Tibial artery (tissue), 4 donors: ENCODE measurements at regions of chr1 and their contacts with region 1.

Region 1: GRCh38 chr1:84506002-84506728 is at the starts of genes GNG5 and SPATA1:
- DNase-seq: peak; percentile 98 to 99
- H3K4me3 ChIP-seq: peak within 1 kb of the TSS; percentile 61 to 76
- H3K27ac ChIP-seq: peak within 1 kb of the TSS; percentile 86 to 97
- H3K4me1 ChIP-seq: peaks cover 0 to 34% (median 21%) of the 10 kb centered on the region in 4 donors
- H3K27me3 ChIP-seq: no peaks in the 10 kb centered on the region
- CTCF ChIP-seq: no peak

Region 2: DNA sequence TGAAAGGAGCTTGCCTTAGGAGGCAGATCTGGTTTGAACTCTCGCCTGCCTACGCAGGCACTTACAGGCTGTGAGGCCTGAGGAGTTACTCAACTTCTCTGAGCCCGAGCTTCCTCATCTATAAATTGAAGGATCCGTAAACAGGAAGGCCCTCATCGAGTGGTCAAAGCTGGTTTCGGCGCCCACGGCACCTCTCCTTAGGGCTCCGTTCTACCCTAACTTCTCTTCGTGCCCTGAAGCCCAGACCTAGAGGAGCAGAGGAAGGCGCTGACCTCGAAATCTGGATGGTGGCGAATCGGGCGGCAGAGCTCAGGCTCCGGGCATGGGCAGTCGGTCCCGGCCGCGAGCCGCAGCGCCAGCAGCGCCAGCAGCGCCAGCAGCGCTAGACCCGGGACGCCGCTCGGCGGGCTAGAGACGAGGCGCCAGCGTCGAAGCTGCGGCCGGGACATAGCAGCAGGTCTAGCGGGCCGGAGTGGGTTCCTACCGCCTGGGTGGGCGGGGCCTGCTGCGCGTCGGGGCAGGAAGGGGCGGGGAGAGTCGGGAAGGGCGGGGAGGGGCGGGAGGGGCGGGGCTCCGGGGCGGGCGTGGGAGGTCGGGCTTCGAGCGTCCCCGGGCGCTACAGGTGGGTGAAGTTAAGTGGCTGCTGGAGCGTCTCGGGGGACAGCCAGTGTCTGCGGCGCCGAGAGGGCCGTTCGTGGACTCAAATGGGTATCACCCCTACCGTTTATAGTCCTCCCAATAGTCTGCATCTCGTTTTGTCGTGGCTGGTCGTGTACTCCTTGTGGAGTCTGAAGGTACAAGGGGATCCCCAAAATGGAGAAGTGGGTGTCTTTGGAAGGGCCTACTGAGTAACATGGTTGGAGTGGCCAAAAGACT is 68.0 kb after region 1 on chr1 and contains the start of gene CTBS:
- intact Hi-C with region 1: loop called (anchors 5 kb)
- DNase-seq: peak; percentile 81 to 93
- H3K4me3 ChIP-seq: peak within 1 kb of the TSS; percentile 74 to 77
- H3K27ac ChIP-seq: peak within 1 kb of the TSS; percentile 98 to 99
- H3K4me1 ChIP-seq: peaks cover 0 to 29% (median 9%) of the 10 kb centered on the region in 4 donors
- H3K27me3 ChIP-seq: no peaks in the 10 kb centered on the region
- CTCF ChIP-seq: no peak

Region 3: GRCh38 chr1:84603941-84604830 is 98.0 kb after region 1 on chr1:
- intact Hi-C with region 1: loop called (anchors 10 kb)
- DNase-seq: peak; percentile 57 to 86
- H3K4me3 ChIP-seq: peak overlapping the region; percentile 40 to 48
- H3K27ac ChIP-seq: peak overlapping the region; percentile 68 to 72
- H3K4me1 ChIP-seq: peaks cover 0 to 29% (median 16%) of the 10 kb centered on the region in 4 donors
- H3K27me3 ChIP-seq: no peaks in the 10 kb centered on the region
- CTCF ChIP-seq: peak; percentile 83 to 88

Region 4: DNA sequence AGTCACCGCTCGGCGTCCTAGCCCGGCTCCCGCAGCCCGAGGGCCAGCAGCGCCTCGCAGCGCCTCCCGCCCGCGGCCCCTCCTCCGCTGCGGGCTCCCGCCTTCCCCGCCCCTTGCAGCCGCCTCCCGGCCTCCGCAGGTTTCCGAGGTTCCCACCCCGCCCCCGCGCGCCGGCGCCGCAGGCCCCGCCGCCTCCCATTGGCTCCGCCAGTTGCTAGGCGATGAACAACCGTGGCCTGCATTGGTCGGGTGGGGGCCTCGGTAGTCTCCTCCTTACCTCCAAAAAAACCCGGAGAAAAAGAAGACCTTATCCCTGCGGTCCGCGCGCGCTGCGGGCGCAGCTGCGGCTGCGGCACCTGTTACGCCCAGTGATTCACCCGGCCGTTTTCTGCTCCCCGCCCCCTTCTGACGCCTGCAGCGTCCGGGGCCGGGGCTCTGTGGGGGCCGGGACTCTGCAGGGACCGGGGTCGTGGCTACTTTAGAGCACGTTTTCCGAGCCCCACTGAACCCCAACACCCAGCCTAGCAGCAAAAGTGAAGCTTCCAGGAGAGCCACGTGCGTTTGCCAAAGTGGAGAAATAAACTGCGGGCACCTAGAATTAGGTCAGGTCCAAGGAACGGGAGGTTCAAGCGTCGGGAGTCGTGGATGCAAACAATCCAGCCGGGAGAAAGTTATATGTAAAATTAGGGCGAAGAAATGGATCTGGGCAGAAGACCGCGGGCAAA is 184.4 kb after region 1 on chr1 and contains the start of gene SSX2IP:
- intact Hi-C with region 1: loop called (anchors 10 kb)
- DNase-seq: peak; percentile 95 to 99
- H3K4me3 ChIP-seq: peak within 1 kb of the TSS; percentile 92 to 96
- H3K27ac ChIP-seq: peak within 1 kb of the TSS; percentile 86 to 87
- H3K4me1 ChIP-seq: peaks cover 0 to 20% (median 10%) of the 10 kb centered on the region in 4 donors
- H3K27me3 ChIP-seq: no peaks in the 10 kb centered on the region
- CTCF ChIP-seq: no peak